PC-9 (cell line): ENCODE measurements at regions of chr10 and their contacts with region 1.

Region 1: GRCh38 chr10:24292304-24293293 is 83.7 kb downstream of the KIAA1217 start:
- DNase-seq: no peak
- H3K4me3 ChIP-seq: no peak overlapping the region
- H3K27ac ChIP-seq: peak overlapping the region; percentile 55
- H3K4me1 ChIP-seq: peaks cover 13% of the 10 kb centered on the region
- H3K27me3 ChIP-seq: no peaks in the 10 kb centered on the region
- CTCF ChIP-seq: no peak

Region 2: DNA sequence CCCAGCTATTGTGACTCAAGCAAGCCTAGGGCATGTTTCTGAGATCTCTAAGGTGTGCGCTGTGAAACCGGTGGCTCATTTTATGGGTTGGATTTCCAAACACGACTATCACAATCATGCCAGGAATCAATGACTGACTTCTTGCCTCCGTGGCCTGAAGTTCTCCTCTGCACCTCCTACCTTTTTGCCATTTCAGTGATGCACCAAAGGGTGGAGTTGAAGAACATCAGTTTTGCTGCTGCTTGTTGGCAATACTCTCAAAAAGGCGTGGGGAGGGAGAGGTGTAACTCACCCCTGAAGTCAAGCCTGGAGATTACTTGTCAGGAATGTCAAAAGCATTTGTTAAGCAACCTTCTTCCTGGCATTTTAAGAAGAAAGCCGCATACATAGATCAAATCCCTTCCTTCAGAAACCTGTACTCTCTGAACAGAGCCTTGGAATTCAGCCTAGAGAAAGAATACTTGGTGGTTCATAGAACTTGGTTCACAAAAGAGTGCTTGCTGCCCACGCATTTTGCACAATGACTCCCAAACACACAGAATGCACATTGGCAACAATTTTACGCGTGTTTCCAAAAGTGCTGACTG is 42.7 kb before region 1 on chr10:
- CTCF ChIA-PET with region 1: no interaction called
- POLR2A ChIA-PET with region 1: interaction called, 4 read pairs
- intact Hi-C with region 1: loop called (anchors 5 kb)
- DNase-seq: peak in 1 of 2 experiments; percentile 51
- H3K4me3 ChIP-seq: no peak overlapping the region
- H3K27ac ChIP-seq: 0 out of 2 replicates have a peak overlapping the region, but pooled peaks have one; percentile 17
- H3K4me1 ChIP-seq: peaks cover 40% of the 10 kb centered on the region
- H3K27me3 ChIP-seq: no peaks in the 10 kb centered on the region
- CTCF ChIP-seq: no peak

Region 3: GRCh38 chr10:24262931-24263590 is 29.5 kb before region 1 on chr10:
- CTCF ChIA-PET with region 1: no interaction called
- POLR2A ChIA-PET with region 1: no interaction called
- intact Hi-C with region 1: no loop called
- DNase-seq: no peak
- H3K4me3 ChIP-seq: no peak overlapping the region
- H3K27ac ChIP-seq: no peak overlapping the region
- H3K4me1 ChIP-seq: peaks cover 13% of the 10 kb centered on the region
- H3K27me3 ChIP-seq: no peaks in the 10 kb centered on the region
- CTCF ChIP-seq: no peak